ENCODE measurements at regions of chr10 and their contacts with region 1.

Region 1: DNA sequence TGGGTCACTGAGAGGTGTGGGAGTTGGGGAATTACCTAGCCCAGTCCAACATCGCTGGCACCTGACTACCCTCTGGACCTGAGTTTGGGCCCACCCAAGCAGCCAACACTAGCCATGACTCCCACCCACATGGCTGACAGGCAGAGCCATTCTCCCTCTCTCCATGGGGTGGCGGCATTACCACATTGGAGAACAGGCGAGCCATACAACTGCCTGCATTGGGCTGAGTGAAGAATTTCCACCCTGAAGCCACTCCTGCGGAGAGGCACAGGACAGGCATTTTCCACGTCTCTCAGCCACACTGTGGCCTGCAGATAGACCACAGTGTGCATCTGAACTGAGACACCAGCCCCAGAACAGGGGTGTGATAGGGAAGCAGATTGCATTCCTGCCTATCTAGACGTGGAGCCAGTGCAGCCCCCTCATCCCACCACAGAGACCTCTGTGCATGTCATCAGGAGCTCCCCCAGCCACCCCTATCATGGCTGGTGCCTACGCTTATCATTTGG is 58.2 kb upstream of the ANTXRL start:
- DNase-seq: no peak
- ATAC-seq: peak; percentile 97
- H3K4me3 ChIP-seq: no peak overlapping the region
- H3K27ac ChIP-seq: no peak overlapping the region
- H3K4me1 ChIP-seq: no peaks in the 10 kb centered on the region
- H3K27me3 ChIP-seq: no peaks in the 10 kb centered on the region
- CTCF ChIP-seq: peak; percentile 84 to 89 (median 87)
- EP300 ChIP-seq: no peak
- POLR2A ChIP-seq: no peak
- RAD21 ChIP-seq: peak; percentile 89

Region 2: GRCh38 chr10:46525177-46525823 is 296.7 kb after region 1 on chr10:
- CTCF ChIA-PET with region 1: no interaction called
- POLR2A ChIA-PET with region 1: no interaction called
- RAD21 ChIA-PET with region 1: no interaction called
- SMC1A ChIA-PET with region 1: no interaction called
- in situ Hi-C with region 1: no loop called
- intact Hi-C with region 1: loop called (anchors 10 kb)
- DNase-seq: no peak
- ATAC-seq: peak; percentile 31; the same call in 1 of the 3 replicates
- H3K4me3 ChIP-seq: no peak overlapping the region
- H3K27ac ChIP-seq: no peak overlapping the region
- H3K4me1 ChIP-seq: no peaks in the 10 kb centered on the region
- H3K27me3 ChIP-seq: no peaks in the 10 kb centered on the region
- CTCF ChIP-seq: no peak; a peak in 1 of 6 replicates
- EP300 ChIP-seq: no peak
- POLR2A ChIP-seq: no peak
- RAD21 ChIP-seq: no peak

Measured in GM12878 (cell line).